Activated T-helper 2 cell treated with anti-CD3 and anti-CD28 coated beads, Interferon-gamma antibody, Interleukin-2, Interleukin-4, amounts not matched to agents 10 μg/mL and 5 μg/mL and 100 μg/mL, durations not matched to agents 14 hours and 24 hours and 36 hours (primary cell): ENCODE measurements at regions of chr6 and their contacts with region 1.

Region 1: DNA sequence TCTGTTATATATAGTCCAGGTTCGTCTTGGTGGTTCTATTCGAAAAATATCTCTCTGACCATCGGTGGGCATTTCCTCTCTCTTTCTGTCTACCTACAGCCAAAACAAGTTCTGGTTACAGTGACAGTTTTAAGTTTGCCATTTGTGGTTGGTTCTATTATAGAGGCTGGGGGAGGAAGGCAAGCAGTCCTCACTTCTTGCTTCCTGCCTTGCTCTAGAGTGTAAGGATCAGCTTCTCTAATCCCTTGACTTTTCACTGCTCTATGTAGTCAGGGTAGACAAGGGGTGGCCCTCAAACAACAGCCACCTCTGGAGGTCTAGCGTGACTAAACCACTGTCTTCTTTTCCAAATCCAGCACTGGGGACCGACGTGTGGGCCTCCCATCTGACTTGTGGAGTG is 16.1 kb downstream of the E2F3 start:
- DNase-seq: no peak
- H3K4me3 Mint-ChIP-seq: no peak overlapping the region
- H3K27ac Mint-ChIP-seq: peak overlapping the region; percentile 43
- H3K4me1 Mint-ChIP-seq: peaks cover 54% of the 10 kb centered on the region
- H3K27me3 Mint-ChIP-seq: no peaks in the 10 kb centered on the region

Region 2: DNA sequence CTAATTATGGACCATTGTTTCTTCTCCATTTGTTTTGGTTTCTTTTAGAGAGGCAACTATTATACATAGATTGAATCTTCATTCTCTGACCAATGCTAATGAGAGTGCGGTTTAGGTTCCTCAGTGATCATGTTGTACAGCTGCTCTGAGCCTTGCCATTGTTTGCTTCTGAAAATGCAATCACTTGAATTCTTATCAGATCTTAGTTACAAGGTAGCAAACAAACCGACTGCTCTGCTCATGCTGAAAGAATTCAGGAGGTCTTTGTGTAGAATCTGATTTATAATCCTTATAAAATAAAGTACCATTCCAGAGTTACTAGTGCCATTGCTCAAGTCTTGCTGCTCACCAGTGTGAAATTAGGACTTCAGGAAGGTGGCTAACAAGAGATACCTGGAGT is 1149.7 kb before region 1 on chr6:
- intact Hi-C with region 1: no loop called
- DNase-seq: no peak
- H3K4me3 Mint-ChIP-seq: no peak overlapping the region
- H3K27ac Mint-ChIP-seq: no peak overlapping the region
- H3K4me1 Mint-ChIP-seq: no peaks in the 10 kb centered on the region
- H3K27me3 Mint-ChIP-seq: no peaks in the 10 kb centered on the region

Region 3: DNA sequence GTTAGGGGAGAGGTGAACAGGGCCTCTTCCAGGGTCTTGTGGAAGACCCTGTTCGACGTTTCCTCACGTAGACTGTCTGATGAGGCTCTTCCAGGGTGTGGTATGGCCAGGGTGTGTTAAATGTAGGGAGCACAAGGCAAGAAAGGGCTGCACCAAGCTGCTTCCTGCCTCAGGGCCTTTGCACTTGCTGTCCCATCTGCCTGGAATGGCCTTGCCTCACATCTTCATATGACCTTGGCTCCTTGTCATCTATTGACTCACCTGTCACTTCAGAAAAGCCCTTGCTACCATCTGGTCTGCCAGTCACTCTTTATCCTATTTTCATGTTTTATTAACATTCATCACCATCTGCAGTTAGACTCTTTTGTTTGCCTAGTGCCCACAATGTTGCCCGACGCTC is 14.9 kb after region 1 on chr6:
- intact Hi-C with region 1: loop called (anchors 2 kb)
- DNase-seq: no peak
- H3K4me3 Mint-ChIP-seq: no peak overlapping the region
- H3K27ac Mint-ChIP-seq: no peak overlapping the region
- H3K4me1 Mint-ChIP-seq: peaks cover 8% of the 10 kb centered on the region
- H3K27me3 Mint-ChIP-seq: no peaks in the 10 kb centered on the region

Region 4: DNA sequence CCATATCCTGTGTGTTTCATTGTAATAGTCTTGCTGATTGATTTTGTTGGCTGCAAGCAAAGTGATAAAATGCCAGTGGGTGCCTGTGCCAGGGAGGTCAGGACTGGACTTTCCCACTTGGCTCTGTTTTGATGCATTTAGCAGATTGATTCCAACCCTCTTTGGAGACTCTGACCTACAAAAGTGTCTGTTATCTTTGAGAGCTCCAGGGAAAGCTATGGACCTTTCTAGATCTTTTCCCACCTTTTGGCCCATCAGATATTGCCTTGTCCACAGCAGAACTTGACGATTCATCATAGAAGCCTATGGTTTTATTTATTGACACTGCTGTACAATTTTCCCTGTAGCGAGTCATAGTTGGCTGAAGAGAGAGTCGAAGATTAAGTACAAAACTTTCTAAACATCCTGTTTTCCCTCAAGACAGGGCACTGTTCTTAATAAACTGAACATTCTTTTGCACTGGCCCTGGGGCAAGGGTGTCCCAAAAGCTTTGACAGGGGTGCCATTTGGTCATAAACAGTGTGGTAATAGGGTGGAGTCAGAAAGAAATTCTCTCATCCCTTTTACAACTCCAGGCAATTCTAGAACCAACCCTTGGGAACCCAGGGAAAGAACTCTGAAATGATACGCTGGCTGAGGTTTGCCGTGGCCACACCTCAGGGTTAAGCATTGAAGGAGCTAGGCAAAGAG is 37.6 kb after region 1 on chr6:
- intact Hi-C with region 1: loop called (anchors 5 kb)
- DNase-seq: no peak
- H3K4me3 Mint-ChIP-seq: no peak overlapping the region
- H3K27ac Mint-ChIP-seq: peak overlapping the region; percentile 67
- H3K4me1 Mint-ChIP-seq: peaks cover 40% of the 10 kb centered on the region
- H3K27me3 Mint-ChIP-seq: no peaks in the 10 kb centered on the region